H1 (cell line): ENCODE measurements at regions of chr2 and their contacts with region 1.

Region 1: GRCh38 chr2:218691234-218691633 is 19.3 kb downstream of the STK36 start:
- DNase-seq: no peak
- H3K4me3 ChIP-seq: no peak overlapping the region
- H3K27ac ChIP-seq: no peak overlapping the region
- H3K4me1 ChIP-seq: no peaks in the 10 kb centered on the region
- H3K27me3 ChIP-seq: no peaks in the 10 kb centered on the region
- CTCF ChIP-seq: no peak
- EP300 ChIP-seq: no peak
- POLR2A ChIP-seq: no peak
- RAD21 ChIP-seq: no peak

Region 2: DNA sequence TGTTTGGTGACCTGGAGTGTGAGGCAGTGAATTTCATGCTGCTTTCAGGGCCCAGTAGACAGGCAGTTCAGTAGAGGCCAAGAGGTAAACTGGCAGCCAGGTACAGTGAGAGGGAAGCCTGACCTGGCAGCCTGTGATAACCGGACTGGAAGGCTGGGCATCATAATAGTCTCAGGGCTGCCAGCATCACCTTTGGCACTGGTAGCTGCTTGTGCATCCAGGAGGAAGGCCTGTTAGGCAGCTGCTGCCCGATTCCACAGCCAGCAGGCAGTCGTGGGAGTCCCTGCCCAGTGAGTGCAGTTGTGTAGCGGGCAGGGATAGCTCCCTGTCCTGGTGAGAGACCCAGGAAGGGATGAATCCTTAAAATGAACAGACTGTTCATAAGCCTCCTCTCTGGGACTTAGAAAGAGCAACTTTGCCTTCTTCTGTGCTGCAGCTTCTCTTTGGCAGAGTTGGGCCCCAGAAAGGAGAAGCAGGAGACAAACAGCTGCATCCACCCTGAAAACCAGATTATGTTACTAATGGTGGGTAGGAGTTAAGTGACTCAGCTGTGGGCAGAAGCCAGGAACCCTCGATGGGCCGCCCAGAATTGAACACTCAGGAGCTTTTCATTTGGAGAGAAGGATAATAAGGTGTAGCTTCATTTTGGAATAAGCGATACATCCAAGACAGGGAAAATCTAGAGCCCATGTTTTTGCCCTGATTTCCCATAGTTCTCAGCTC is 438.6 kb before region 1 on chr2:
- CTCF ChIA-PET with region 1: no interaction called
- POLR2A ChIA-PET with region 1: no interaction called
- DNase-seq: no peak
- H3K4me3 ChIP-seq: no peak overlapping the region
- H3K27ac ChIP-seq: no peak overlapping the region
- H3K4me1 ChIP-seq: no peaks in the 10 kb centered on the region
- H3K27me3 ChIP-seq: no peaks in the 10 kb centered on the region
- CTCF ChIP-seq: no peak
- EP300 ChIP-seq: no peak
- POLR2A ChIP-seq: no peak
- RAD21 ChIP-seq: no peak

Region 3: DNA sequence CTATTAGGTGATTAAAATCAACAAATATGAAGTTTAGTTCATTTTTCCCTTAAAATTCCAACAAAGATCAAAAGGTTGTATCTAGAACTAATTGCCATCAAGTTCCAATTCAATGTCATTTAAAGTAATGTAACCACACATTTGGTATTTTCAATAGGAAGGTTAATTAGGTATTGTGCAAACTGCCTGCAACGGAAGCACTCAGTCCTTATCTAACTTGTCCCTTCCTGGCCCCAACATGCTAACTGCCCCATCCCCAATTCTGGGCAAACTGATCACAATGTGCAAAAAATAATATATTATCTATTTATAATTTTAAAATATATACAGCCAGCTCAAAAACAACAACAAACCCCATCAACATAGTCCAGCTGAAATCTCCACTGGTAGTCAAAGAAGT is 239.2 kb before region 1 on chr2:
- CTCF ChIA-PET with region 1: no interaction called
- POLR2A ChIA-PET with region 1: no interaction called
- DNase-seq: no peak
- H3K4me3 ChIP-seq: no peak overlapping the region
- H3K27ac ChIP-seq: no peak overlapping the region
- H3K4me1 ChIP-seq: no peaks in the 10 kb centered on the region
- H3K27me3 ChIP-seq: no peaks in the 10 kb centered on the region
- CTCF ChIP-seq: no peak
- EP300 ChIP-seq: no peak
- POLR2A ChIP-seq: no peak
- RAD21 ChIP-seq: no peak

Region 4: GRCh38 chr2:218659258-218659987 is 31.8 kb before region 1 on chr2 and contains the starts of genes BCS1L and ZNF142:
- CTCF ChIA-PET with region 1: interaction called, 15 read pairs
- POLR2A ChIA-PET with region 1: interaction called, 10 read pairs
- DNase-seq: peak; percentile 62 to 97
- H3K4me3 ChIP-seq: peak within 1 kb of the TSS; percentile 84 to 95 (median 86)
- H3K27ac ChIP-seq: peak within 1 kb of the TSS; percentile 48; the same call in 1 of the 2 replicates
- H3K4me1 ChIP-seq: peaks cover 0 to 5% (median under 1%) of the 10 kb centered on the region in 4 experiments; a peak in 2 of 7 replicates
- H3K27me3 ChIP-seq: no peaks in the 10 kb centered on the region
- CTCF ChIP-seq: 0 out of 4 replicates have a peak, but pooled peaks of 1 of the 3 experiments have one; percentile 7
- EP300 ChIP-seq: peak in 1 of 2 experiments; percentile 54; a peak in 1 of 3 replicates
- POLR2A ChIP-seq: peak; percentile 50 to 52; a peak in 2 of 3 replicates
- RAD21 ChIP-seq: no peak
- total RNA-seq, gene BCS1L: 22.0 and 23.7 TPM in 2 replicates
- total RNA-seq, gene ZNF142: 32.5 and 37.9 TPM in 2 replicates

Region 5: DNA sequence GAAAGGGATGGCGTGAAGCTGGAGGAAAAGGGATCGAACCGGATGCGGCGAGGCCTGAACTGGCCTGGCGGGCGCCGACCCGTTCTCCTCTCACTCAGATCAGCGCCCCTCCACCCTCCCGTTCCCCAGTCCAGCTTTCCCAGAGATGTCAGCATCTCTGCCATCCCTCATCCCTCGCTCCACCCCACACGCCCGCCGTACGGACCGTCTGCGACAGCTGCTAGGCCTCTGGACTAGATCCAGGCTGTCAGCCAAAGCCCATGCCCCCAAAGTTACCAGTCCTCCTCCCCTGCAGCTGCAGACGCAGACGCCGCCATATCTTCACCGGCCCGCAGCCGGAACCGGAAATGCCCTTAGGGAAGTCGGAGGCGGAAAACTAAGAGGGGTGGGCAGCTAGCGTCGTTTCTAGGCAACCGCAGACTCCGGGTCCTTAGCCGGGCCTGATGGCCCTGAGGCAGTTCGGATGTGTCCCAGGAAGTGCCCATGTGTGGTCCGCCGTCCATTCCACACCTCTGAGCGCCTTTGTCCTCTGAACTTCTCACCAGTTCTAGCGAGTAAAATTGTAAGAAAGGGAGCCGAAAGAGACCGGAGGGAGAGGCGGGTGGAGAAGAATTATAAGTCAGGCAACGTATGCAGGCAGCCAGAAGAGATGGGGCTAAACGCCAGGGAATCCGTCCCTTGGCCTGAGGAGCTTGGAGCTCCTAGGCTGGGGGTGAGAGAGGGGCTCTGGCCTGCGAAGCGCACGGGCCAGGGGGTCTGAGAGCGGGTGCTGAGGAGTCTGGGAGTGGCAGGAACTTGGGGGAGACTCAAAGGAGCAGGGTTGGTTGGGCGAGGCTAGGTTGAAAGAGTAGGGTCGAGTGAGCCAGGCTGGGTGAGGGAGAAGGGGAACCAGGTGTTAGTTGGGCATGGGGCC is 19.3 kb before region 1 on chr2 and contains the starts of genes RNF25 and STK36:
- CTCF ChIA-PET with region 1: interaction called, 19 read pairs
- POLR2A ChIA-PET with region 1: interaction called, 13 read pairs
- DNase-seq: peak; percentile 74 to 85
- H3K4me3 ChIP-seq: peak within 1 kb of the TSS; percentile 96 to 99 (median 96)
- H3K27ac ChIP-seq: peak within 1 kb of the TSS; percentile 86
- H3K4me1 ChIP-seq: peaks cover 0 to 4% (median 1%) of the 10 kb centered on the region in 4 experiments; a peak in 3 of 7 replicates
- H3K27me3 ChIP-seq: no peaks in the 10 kb centered on the region
- CTCF ChIP-seq: no peak
- EP300 ChIP-seq: no peak
- POLR2A ChIP-seq: peak; percentile 70 to 74
- RAD21 ChIP-seq: no peak
- total RNA-seq, gene RNF25: 19.6 and 24.7 TPM in 2 replicates
- total RNA-seq, gene STK36: 34.9 and 41.4 TPM in 2 replicates

Region 6: DNA sequence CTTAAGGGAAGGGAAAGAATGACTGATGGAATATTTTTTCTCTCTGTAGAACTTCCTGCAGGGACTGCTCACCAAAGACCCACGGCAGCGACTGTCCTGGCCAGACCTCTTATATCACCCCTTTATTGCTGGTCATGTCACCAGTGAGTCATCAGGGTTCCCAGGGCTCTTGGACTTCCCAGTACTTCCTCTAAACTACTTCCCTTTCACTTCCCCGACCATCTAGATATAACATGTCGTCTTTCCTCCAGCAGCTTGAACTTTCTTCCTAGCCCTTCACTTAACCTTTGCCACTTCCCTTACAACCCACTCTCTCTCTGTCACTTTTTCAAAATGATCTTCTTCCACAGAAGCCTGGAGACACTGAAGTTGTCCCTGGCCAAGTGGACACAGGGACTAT is 12.1 kb before region 1 on chr2:
- CTCF ChIA-PET with region 1: interaction called, 11 read pairs
- POLR2A ChIA-PET with region 1: interaction called, 3 read pairs
- DNase-seq: no peak
- H3K4me3 ChIP-seq: no peak overlapping the region
- H3K27ac ChIP-seq: no peak overlapping the region
- H3K4me1 ChIP-seq: no peaks in the 10 kb centered on the region
- H3K27me3 ChIP-seq: no peaks in the 10 kb centered on the region
- CTCF ChIP-seq: no peak
- EP300 ChIP-seq: no peak
- POLR2A ChIP-seq: no peak
- RAD21 ChIP-seq: no peak

Region 7: GRCh38 chr2:218701806-218702205 is 10.6 kb after region 1 on chr2:
- CTCF ChIA-PET with region 1: interaction called, 27 read pairs
- POLR2A ChIA-PET with region 1: interaction called, 4 read pairs
- DNase-seq: no peak
- H3K4me3 ChIP-seq: no peak overlapping the region
- H3K27ac ChIP-seq: no peak overlapping the region
- H3K4me1 ChIP-seq: no peaks in the 10 kb centered on the region
- H3K27me3 ChIP-seq: no peaks in the 10 kb centered on the region
- CTCF ChIP-seq: no peak
- EP300 ChIP-seq: no peak
- POLR2A ChIP-seq: no peak
- RAD21 ChIP-seq: no peak

Region 8: DNA sequence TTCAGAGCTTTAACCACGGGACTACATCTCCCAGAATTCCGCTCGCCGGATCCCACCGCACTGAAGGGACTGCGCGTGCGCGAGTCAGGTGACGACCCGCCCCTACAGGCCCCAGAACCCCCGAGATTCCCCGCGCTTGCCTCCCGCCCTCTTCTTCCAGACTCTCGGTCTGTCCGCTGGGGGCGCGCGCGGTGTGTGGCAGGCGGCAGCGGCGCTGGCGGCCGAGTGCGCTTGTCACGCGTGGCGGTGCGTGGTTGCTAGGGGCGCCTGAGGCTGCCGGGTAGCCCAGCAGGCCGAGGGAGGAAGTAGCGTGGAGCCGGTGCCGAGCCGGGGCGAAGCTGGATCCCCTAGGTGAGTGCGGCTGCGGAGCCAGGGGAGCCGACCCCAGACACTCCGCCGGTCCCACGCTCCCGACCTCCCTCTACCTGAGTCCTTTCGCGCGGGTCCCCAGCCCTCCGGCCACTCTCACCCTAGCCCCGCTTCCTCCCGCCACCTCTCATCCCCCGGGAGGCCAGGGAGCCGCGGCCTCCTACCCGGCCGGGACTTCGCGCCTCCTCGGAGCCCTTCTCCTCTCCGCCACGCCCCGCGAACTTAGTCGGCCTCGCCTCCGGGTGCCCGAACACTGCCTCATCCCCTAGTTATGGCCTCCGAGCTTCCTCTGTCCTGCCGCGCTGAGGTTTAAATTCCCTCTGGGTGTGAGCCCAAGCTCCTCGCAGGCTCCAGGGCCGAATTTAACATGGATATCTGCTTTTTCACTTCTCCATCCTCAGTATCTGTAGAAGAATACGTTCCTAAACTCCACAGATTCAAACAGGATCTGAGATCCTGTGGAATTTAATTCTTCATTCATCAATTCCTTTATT is 19.7 kb after region 1 on chr2 and contains the start of gene TTLL4:
- CTCF ChIA-PET with region 1: interaction called, 17 read pairs
- POLR2A ChIA-PET with region 1: no interaction called
- DNase-seq: peak; percentile 77 to 98
- H3K4me3 ChIP-seq: peak within 1 kb of the TSS; percentile 85 to 90 (median 89)
- H3K27ac ChIP-seq: peak within 1 kb of the TSS; percentile 46; the same call in 1 of the 2 replicates
- H3K4me1 ChIP-seq: peaks cover 0 to 4% (median 1%) of the 10 kb centered on the region in 4 experiments; a peak in 4 of 7 replicates
- H3K27me3 ChIP-seq: no peaks in the 10 kb centered on the region
- CTCF ChIP-seq: peak; percentile 78 to 79 (median 79)
- EP300 ChIP-seq: no peak
- POLR2A ChIP-seq: peak; percentile 66 to 76
- RAD21 ChIP-seq: peak; percentile 30 to 49; a peak in 2 of 4 replicates
- total RNA-seq, gene TTLL4: 105 and 106 TPM in 2 replicates

Region 9: GRCh38 chr2:218727502-218728165 is 36.4 kb after region 1 on chr2:
- CTCF ChIA-PET with region 1: interaction called, 10 read pairs
- POLR2A ChIA-PET with region 1: no interaction called
- DNase-seq: no peak
- H3K4me3 ChIP-seq: no peak overlapping the region
- H3K27ac ChIP-seq: no peak overlapping the region
- H3K4me1 ChIP-seq: peaks cover 0 to 12% (median 6%) of the 10 kb centered on the region in 4 experiments; a peak in 5 of 7 replicates
- H3K27me3 ChIP-seq: no peaks in the 10 kb centered on the region
- CTCF ChIP-seq: peak in 2 of 3 experiments; percentile 61 to 63; a peak in 3 of 4 replicates
- EP300 ChIP-seq: no peak
- POLR2A ChIP-seq: no peak
- RAD21 ChIP-seq: peak; percentile 74 to 75